MCF 10A (cell line): ENCODE measurements at regions of chr12 and their contacts with region 1.

Region 1: GRCh38 chr12:24991209-24992049 is 42.5 kb upstream of the BCAT1 start:
- DNase-seq: peak; percentile 69
- H3K4me3 Mint-ChIP-seq: no peak overlapping the region
- H3K27ac Mint-ChIP-seq: no peak overlapping the region
- H3K4me1 Mint-ChIP-seq: peaks cover 5% of the 10 kb centered on the region
- H3K27me3 Mint-ChIP-seq: no peaks in the 10 kb centered on the region
- CTCF ChIP-seq: peak; percentile 51

Region 2: GRCh38 chr12:24852420-24852819 is 139.0 kb before region 1 on chr12:
- CTCF ChIA-PET with region 1: interaction called, 6 read pairs
- POLR2A ChIA-PET with region 1: no interaction called
- intact Hi-C with region 1: loop called (anchors 10 kb)
- DNase-seq: no peak
- H3K4me3 Mint-ChIP-seq: no peak overlapping the region
- H3K27ac Mint-ChIP-seq: no peak overlapping the region
- H3K4me1 Mint-ChIP-seq: peaks cover 18% of the 10 kb centered on the region
- H3K27me3 Mint-ChIP-seq: no peaks in the 10 kb centered on the region
- CTCF ChIP-seq: peak; percentile 42

Region 3: GRCh38 chr12:25052196-25052913 is 60.9 kb after region 1 on chr12:
- CTCF ChIA-PET with region 1: interaction called, 11 read pairs
- POLR2A ChIA-PET with region 1: interaction called, 43 read pairs
- intact Hi-C with region 1: no loop called
- DNase-seq: no peak
- H3K4me3 Mint-ChIP-seq: no peak overlapping the region
- H3K27ac Mint-ChIP-seq: peak overlapping the region; percentile 49
- H3K4me1 Mint-ChIP-seq: peaks cover 41% of the 10 kb centered on the region
- H3K27me3 Mint-ChIP-seq: no peaks in the 10 kb centered on the region
- CTCF ChIP-seq: no peak

Region 4: GRCh38 chr12:25130741-25131188 is 139.3 kb after region 1 on chr12:
- CTCF ChIA-PET with region 1: interaction called, 90 read pairs
- POLR2A ChIA-PET with region 1: interaction called, 24 read pairs
- intact Hi-C with region 1: loop called (anchors 1 kb)
- DNase-seq: peak; percentile 59
- H3K4me3 Mint-ChIP-seq: no peak overlapping the region
- H3K27ac Mint-ChIP-seq: no peak overlapping the region
- H3K4me1 Mint-ChIP-seq: peaks cover 10% of the 10 kb centered on the region
- H3K27me3 Mint-ChIP-seq: no peaks in the 10 kb centered on the region
- CTCF ChIP-seq: peak; percentile 57

Region 5: GRCh38 chr12:25386831-25387731 is 395.7 kb after region 1 on chr12:
- CTCF ChIA-PET with region 1: interaction called, 5 read pairs
- POLR2A ChIA-PET with region 1: interaction called, 6 read pairs
- intact Hi-C with region 1: loop called (anchors 1 kb)
- DNase-seq: peak; percentile 89
- H3K4me3 Mint-ChIP-seq: peak overlapping the region; percentile 96
- H3K27ac Mint-ChIP-seq: peak overlapping the region; percentile 91
- H3K4me1 Mint-ChIP-seq: peaks cover 9% of the 10 kb centered on the region
- H3K27me3 Mint-ChIP-seq: no peaks in the 10 kb centered on the region
- CTCF ChIP-seq: peak; percentile 72